ENCODE measurements at regions of chr22 and their contacts with region 1.

Region 1: DNA sequence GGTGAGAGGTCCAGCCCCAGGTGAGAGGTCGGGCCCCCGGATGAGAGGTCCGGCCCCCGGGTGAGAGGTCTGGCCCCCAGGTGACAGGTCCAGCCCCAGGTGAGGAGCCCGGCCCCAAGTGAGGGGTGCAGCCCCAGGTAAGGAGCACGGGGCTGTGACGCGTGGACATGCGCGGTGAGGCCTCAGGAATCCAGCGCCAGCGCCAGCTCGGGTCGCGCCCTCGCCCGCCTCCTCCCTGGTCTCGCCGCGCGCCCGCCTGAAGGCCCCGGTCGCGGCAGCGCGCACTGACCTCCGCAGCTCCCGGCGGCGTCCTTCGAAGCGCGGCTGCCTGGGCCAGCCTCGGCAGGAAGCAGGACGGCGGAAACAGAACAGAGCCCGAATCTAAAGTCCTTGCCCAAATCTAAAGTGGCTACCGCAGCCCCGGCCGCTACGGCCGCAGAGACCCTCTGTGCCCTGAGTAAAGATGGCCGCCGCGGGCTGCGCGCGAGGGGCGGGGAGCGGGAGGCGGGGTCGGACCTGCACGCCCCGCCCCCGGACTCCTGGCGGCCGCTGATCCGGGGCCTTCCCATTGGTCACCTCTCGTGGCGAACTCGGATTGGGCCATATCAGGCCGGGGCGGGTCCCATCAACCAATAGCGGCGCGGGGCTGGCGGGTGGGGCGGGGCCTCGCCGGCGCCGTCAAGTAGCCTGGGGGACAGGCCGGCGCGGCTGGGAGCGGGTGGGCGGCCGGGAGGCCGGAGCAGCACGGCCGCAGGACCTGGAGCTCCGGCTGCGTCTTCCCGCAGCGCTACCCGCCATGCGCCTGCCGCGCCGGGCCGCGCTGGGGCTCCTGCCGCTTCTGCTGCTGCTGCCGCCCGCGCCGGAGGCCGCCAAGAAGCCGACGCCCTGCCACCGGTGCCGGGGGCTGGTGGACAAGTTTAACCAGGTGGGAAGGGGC is at the starts of genes ALG12 and CRELD2:
- DNase-seq: peak; percentile 98 to 100 (median 99)
- H3K4me3 ChIP-seq: peak within 1 kb of the TSS; percentile 62 to 97 (median 89)
- H3K27ac ChIP-seq: peak within 1 kb of the TSS in 58 of 59 donors; percentile 65 to 99 (median 93)
- H3K27me3 ChIP-seq: no peaks in the 10 kb centered on the region
- CTCF ChIP-seq: peak in 27 of 56 donors; percentile 6 to 53 (median 26)
- total RNA-seq, gene ALG12: 9.4 to 31.2 (median 15.9) TPM
- total RNA-seq, gene CRELD2: 19.4 to 50.3 (median 29.6) TPM

Region 2: GRCh38 chr22:49827853-49828598 is 90.2 kb before region 1 on chr22 and contains the start of gene BRD1:
- intact Hi-C with region 1: loop called in 1 of 2 experiments (anchors 10 kb)
- DNase-seq: peak in 5 of 10 donors; percentile 41 to 75 (median 64)
- H3K4me3 ChIP-seq: peak within 1 kb of the TSS; percentile 59 to 93 (median 80)
- H3K27ac ChIP-seq: peak within 1 kb of the TSS in 54 of 59 donors; percentile 9 to 86 (median 74)
- H3K27me3 ChIP-seq: no peaks in the 10 kb centered on the region
- CTCF ChIP-seq: no peak
- total RNA-seq, gene BRD1: 23.5 to 55.4 (median 35.6) TPM

Region 3: DNA sequence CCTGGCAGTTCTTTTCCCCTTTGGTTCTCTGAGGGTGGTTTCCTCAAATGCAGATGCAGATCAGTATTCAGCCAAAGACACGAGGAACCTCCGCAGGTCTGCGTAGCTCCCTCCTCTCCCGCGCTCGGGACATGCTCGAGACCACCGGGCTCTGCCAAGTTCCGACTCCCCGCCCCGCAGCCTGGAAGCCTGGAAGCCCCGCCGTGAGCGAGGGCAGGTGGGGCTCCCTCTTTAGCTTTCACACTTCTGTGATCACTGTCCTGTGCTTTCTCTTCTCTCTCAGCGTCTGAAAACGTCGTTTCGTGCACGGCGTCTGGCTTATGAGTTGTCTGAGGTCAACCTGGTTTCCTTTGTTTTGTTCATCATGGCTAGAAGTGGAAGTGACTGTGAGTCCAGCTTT is 38.0 kb before region 1 on chr22:
- intact Hi-C with region 1: no loop called
- DNase-seq: no peak
- H3K4me3 ChIP-seq: no peak overlapping the region
- H3K27ac ChIP-seq: no peak overlapping the region
- H3K27me3 ChIP-seq: no peaks in the 10 kb centered on the region
- CTCF ChIP-seq: no peak

Measured in dorsolateral prefrontal cortex (tissue), 120 donors.